ENCODE measurements at regions of chr16 and their contacts with region 1.

Region 1: DNA sequence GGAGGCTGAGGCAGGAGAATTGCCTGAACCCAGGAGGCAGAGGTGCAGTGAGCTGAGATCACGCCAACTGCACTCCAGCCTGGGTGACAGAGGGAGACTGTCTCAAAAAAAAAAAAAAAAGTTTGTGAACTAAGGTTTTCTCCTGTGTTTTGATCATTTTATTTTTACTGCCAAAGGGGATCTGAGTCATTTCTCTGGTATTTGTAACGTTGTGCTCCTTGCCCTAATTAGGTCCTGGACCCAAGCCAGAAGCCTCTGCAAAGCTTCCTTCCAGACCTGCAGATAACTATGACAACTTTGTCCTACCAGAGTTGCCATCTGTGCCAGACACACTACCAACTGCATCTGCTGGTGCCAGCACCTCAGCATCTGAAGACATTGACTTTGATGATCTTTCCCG is 32.1 kb downstream of the IST1 start:
- DNase-seq: no peak
- H3K4me3 ChIP-seq: no peak overlapping the region
- H3K27ac ChIP-seq: peak overlapping the region; percentile 76 to 83 (median 82)
- H3K4me1 ChIP-seq: peaks cover 55 to 71% (median 59%) of the 10 kb centered on the region in 4 donors
- H3K27me3 ChIP-seq: no peaks in the 10 kb centered on the region
- CTCF ChIP-seq: no peak
- EP300 ChIP-seq: no peak
- POLR2A ChIP-seq: no peak

Region 2: GRCh38 chr16:71894921-71895678 is 32.3 kb before region 1 on chr16 and contains the start of gene IST1:
- intact Hi-C with region 1: loop called (anchors 5 kb)
- DNase-seq: peak; percentile 99
- H3K4me3 ChIP-seq: peak within 1 kb of the TSS; percentile 80 to 94 (median 90)
- H3K27ac ChIP-seq: peak within 1 kb of the TSS; percentile 91 to 99 (median 96)
- H3K4me1 ChIP-seq: peaks cover 39 to 47% (median 46%) of the 10 kb centered on the region in 4 donors
- H3K27me3 ChIP-seq: no peaks in the 10 kb centered on the region
- CTCF ChIP-seq: peak in 1 of 3 experiments; percentile 1
- EP300 ChIP-seq: no peak
- POLR2A ChIP-seq: peak; percentile 56
- total RNA-seq, gene IST1: 132 to 186 (median 166) TPM